Common myeloid progenitor, CD34-positive (primary cell): ENCODE measurements at regions of chr3 and their contacts with region 1.

Region 1: GRCh38 chr3:156151824-156152428 is 31.5 kb downstream of the KCNAB1 start:
- DNase-seq: peak; percentile 56 to 77 (median 71)
- H3K4me3 ChIP-seq: no peak overlapping the region
- H3K27ac ChIP-seq: no peak overlapping the region
- H3K4me1 ChIP-seq: peaks cover 3 to 9% (median 6%) of the 10 kb centered on the region in 4 experiments
- H3K27me3 ChIP-seq: peaks cover 0 to 2% (median 0%) of the 10 kb centered on the region in 5 experiments

Region 2: GRCh38 chr3:156382458-156383346 is 230.8 kb after region 1 on chr3:
- CTCF ChIA-PET with region 1: interaction called, 94 read pairs
- POLR2A ChIA-PET with region 1: no interaction called
- DNase-seq: peak; percentile 10 to 37 (median 36)
- H3K4me3 ChIP-seq: no peak overlapping the region
- H3K27ac ChIP-seq: no peak overlapping the region
- H3K4me1 ChIP-seq: no peaks in the 10 kb centered on the region
- H3K27me3 ChIP-seq: no peaks in the 10 kb centered on the region

Region 3: GRCh38 chr3:156535162-156535627 is 383.3 kb after region 1 on chr3:
- CTCF ChIA-PET with region 1: interaction called, 17 read pairs
- POLR2A ChIA-PET with region 1: no interaction called
- DNase-seq: peak in 2 of 3 donors; percentile 18 to 31
- H3K4me3 ChIP-seq: no peak overlapping the region
- H3K27ac ChIP-seq: no peak overlapping the region
- H3K4me1 ChIP-seq: no peaks in the 10 kb centered on the region
- H3K27me3 ChIP-seq: peaks cover 0 to 4% (median 0%) of the 10 kb centered on the region in 5 experiments

Region 4: DNA sequence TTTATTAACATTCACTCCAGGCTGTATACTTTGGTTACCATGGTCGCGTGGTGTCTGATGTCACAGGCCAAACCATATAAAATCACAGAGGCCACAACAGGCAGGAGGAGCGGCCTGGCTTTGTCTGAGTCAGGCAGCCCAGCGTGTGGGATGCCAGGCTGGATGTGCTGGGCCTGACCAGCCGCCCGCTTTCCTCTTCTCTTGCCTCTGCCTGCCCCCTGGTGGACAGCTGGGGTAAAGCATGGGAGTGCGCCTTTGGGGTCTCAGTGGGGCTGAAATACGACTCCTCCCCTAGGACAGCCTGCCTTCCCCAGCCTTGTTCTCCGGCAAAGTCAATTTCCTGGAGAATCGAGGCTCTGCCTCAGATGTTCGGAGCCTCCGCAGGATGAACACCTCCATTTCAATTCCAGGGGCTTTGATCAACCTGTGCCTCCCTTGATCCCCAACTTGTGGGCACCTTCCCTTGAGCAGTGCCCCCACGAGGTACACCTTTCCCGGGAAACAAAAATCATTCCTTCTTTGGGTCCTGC is 929.8 kb after region 1 on chr3:
- CTCF ChIA-PET with region 1: interaction called, 26 read pairs
- POLR2A ChIA-PET with region 1: no interaction called
- DNase-seq: peak; percentile 77 to 87 (median 85)
- H3K4me3 ChIP-seq: peak overlapping the region in 1 of 7 experiments; percentile 8
- H3K27ac ChIP-seq: no peak overlapping the region
- H3K4me1 ChIP-seq: peaks cover 0 to 4% (median 2%) of the 10 kb centered on the region in 4 experiments
- H3K27me3 ChIP-seq: no peaks in the 10 kb centered on the region